Sciatic nerve (tissue), 2 donors: ENCODE measurements at regions of chr14 and their contacts with region 1.

Region 1: DNA sequence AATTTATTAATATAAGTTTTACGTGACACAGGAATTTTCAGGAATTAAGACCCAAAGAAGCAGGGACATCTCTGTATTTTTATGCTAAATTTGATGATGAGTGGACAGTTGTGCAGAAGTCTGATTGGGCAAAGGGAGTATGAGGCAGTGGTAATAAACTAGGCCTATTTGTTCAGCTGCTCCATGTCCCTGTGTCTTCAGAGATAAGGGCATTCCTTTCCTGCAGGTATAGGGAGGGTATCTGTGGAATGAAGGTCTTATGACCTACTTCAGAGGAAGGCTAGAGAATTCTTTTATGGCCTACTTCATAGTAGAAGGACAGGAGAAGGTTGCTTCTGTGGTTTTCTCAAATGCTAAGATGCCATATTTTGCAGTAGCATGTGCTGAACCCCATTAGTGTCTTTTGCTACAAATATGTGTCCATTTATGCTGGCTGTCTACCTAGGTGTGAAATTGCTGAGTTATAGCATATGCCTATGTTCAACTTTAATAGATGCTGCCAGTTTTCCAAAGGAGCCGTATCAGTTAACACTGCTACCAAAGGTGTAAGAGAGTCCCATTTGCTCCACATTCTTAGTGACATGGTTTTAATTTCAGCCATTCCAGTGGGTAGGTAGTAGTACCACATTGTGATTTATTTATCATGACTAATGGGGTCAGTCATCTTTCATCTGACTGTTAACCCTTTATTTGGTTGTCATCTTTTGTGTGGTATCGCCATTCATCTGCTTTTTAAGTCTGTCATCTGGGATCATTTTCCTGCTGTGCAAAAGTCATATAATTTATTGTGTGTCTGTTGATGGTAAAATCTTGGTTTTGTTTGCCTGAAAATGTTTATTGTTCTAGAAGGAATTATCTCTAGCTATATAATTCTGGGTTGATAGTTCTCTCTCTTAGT is 410.7 kb upstream of the RGS6 start:
- DNase-seq: no peak
- ATAC-seq: no peak

Region 2: GRCh38 chr14:71300566-71301330 is 220.7 kb before region 1 on chr14:
- intact Hi-C with region 1: no loop called
- DNase-seq: no peak
- ATAC-seq: no peak

Region 3: GRCh38 chr14:71397371-71397770 is 124.1 kb before region 1 on chr14:
- intact Hi-C with region 1: loop called (anchors 2 kb)
- DNase-seq: no peak
- ATAC-seq: no peak